GM12878 (cell line): ENCODE measurements at regions of chr12 and their contacts with region 1.

Region 1: GRCh38 chr12:66203820-66204219 is 14.8 kb downstream of the IRAK3 start:
- DNase-seq: no peak
- ATAC-seq: peak; percentile 69
- H3K4me3 ChIP-seq: no peak overlapping the region
- H3K27ac ChIP-seq: no peak overlapping the region
- H3K4me1 ChIP-seq: no peaks in the 10 kb centered on the region
- H3K27me3 ChIP-seq: no peaks in the 10 kb centered on the region
- CTCF ChIP-seq: no peak
- EP300 ChIP-seq: no peak
- POLR2A ChIP-seq: no peak
- RAD21 ChIP-seq: no peak

Region 2: DNA sequence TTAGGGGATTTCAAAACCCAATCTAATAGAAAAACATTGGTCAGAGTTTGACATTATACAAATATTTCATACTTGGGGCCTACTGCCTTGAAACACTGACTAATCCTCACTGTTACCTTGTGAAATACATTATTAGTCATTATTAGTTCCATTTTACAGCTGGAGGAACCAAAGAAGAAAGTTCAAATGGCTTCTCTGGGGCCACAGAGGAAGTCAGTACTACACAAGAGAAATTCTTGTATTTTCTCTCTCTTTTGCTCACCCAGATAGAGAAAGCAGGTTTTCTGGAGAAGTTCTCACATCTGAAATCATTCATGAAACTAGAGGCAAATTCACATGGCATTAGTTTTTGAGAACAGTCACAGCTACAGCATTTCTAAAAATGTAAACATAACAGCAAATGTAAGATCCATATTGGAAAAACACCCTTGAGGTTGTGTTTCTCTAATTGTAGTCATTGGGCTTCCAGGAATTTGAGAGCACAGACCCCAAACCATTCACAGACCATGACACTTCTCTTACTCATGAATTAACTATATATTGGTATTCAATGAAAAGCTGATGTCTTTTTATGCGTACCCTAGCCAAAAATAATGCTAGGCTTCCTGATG is 156.3 kb before region 1 on chr12:
- CTCF ChIA-PET with region 1: no interaction called
- POLR2A ChIA-PET with region 1: no interaction called
- RAD21 ChIA-PET with region 1: no interaction called
- SMC1A ChIA-PET with region 1: no interaction called
- in situ Hi-C with region 1: no loop called
- intact Hi-C with region 1: no loop called
- DNase-seq: no peak
- ATAC-seq: peak; percentile 87
- H3K4me3 ChIP-seq: no peak overlapping the region
- H3K27ac ChIP-seq: peak overlapping the region; percentile 92
- H3K4me1 ChIP-seq: peaks cover 29% of the 10 kb centered on the region
- H3K27me3 ChIP-seq: no peaks in the 10 kb centered on the region
- CTCF ChIP-seq: no peak
- EP300 ChIP-seq: peak in 1 of 2 experiments; percentile 90; a peak in 2 of 4 replicates
- POLR2A ChIP-seq: no peak
- RAD21 ChIP-seq: 0 out of 2 replicates have a peak, but pooled peaks have one; percentile 11

Region 3: DNA sequence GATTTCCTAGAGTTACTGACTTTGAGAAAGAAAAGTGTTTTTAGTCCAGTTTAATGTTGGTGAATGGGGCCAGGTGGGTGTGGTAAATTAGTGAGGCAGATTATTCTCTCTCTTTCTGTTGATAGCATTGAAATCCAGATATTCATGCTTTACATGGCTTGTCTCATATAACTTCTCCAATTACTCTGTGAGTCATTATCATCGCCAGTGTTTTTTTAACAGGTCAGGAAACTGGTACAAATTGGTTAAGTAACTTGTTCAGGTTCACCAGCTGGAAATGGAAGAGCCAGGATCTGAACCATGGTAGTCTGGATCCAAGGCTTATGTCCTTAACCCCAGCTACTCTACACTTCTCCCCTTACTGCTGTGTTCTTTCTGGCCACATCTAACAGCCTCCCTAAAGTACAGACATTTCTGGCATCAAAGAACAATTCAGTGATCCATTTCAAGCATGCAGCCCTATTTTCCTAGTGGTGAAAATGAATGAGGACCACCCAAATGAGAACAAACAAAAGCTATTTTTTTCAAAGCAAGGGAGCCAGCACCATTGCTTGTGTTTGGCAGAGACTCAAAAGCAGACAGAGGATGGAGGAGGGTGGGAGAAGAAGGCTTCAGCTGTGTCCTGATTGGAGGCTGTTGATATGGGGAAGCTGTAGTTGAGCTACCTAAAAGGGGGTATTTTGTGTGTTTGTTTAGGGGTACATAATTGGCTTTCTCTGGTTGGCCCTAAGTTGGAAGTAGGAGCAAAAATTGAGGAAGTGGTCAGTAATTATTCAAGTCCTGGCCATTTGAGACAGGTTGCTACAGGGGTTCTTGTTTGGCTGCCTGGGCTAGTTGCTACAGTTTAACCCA is 13.1 kb before region 1 on chr12:
- CTCF ChIA-PET with region 1: interaction called, 9 read pairs
- POLR2A ChIA-PET with region 1: interaction called, 5 read pairs
- RAD21 ChIA-PET with region 1: interaction called, 4 read pairs
- SMC1A ChIA-PET with region 1: interaction called, 11 read pairs
- in situ Hi-C with region 1: no loop called
- intact Hi-C with region 1: no loop called
- DNase-seq: no peak
- ATAC-seq: peak; percentile 53
- H3K4me3 ChIP-seq: peak overlapping the region; percentile 22; the same call in 1 of the 2 replicates
- H3K27ac ChIP-seq: peak overlapping the region; percentile 38
- H3K4me1 ChIP-seq: peaks cover 25% of the 10 kb centered on the region
- H3K27me3 ChIP-seq: peaks cover 0 to 5% of the 10 kb centered on the region in 2 experiments; a peak in 1 of 4 replicates
- CTCF ChIP-seq: no peak
- EP300 ChIP-seq: 0 out of 4 replicates have a peak, but pooled peaks of 1 of the 2 experiments have one; percentile 10
- POLR2A ChIP-seq: no peak
- RAD21 ChIP-seq: no peak